Naive thymus-derived CD8-positive, alpha-beta T cell (primary cell): ENCODE measurements at regions of chr5 and their contacts with region 1.

Region 1: GRCh38 chr5:54517174-54518092 is at the start of gene SNX18:
- DNase-seq: peak; percentile 84 to 95 (median 92)
- ATAC-seq: peak; percentile 89 to 90
- H3K4me3 Mint-ChIP-seq: peak within 1 kb of the TSS; percentile 80 to 95 (median 93)
- H3K27ac Mint-ChIP-seq: peak within 1 kb of the TSS; percentile 2 to 92 (median 60)
- H3K4me1 Mint-ChIP-seq: peaks cover 7 to 43% (median 15%) of the 10 kb centered on the region in 4 donors
- H3K27me3 Mint-ChIP-seq: peaks cover 0 to 2% (median 0%) of the 10 kb centered on the region in 5 donors
- polyA plus RNA-seq, gene SNX18: 2.6 to 3.3 (median 3.2) TPM

Region 2: DNA sequence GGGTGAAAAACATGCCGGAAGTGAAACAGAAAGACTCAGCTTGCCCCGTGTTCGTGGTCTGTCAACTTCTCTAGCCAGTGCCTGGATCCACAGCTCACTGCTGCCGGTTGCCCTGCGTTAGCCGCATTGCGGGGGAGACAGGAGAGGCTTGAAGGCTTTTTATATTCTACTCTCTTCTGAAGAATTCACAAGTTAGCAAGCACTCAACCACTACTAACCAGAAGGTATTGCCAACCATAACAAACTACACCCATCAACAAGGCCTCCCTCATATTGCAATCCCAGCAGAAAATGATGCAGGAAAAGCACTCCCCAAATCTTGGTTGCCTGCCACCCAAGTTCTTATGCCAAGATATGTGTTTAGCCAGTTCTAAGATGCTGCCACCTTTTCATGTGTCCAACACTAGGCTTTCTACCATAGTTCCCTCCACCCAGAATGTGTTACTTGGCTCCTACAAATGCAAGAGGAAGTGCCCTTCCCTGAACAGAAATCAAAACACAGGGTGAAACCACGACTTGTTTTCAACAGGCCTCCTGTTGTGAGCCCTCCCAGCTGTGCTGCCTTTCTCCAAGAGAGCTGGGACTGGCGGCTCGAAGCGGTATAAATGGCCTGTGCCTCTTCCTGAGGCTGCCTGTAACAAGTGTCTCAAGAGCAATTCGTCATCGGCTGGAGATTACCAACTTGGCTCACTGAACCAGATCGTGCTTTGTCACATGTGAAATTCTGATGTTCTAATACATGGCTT is 129.1 kb after region 1 on chr5:
- POLR2A ChIA-PET with region 1: interaction called, 39 read pairs
- DNase-seq: peak; percentile 8 to 80 (median 60)
- ATAC-seq: peak; percentile 83 to 85
- H3K4me3 Mint-ChIP-seq: peak overlapping the region; percentile 63 to 84 (median 77)
- H3K27ac Mint-ChIP-seq: peak overlapping the region; percentile 91 to 99 (median 95)
- H3K4me1 Mint-ChIP-seq: peaks cover 34 to 70% (median 57%) of the 10 kb centered on the region in 4 donors
- H3K27me3 Mint-ChIP-seq: no peaks in the 10 kb centered on the region

Region 3: DNA sequence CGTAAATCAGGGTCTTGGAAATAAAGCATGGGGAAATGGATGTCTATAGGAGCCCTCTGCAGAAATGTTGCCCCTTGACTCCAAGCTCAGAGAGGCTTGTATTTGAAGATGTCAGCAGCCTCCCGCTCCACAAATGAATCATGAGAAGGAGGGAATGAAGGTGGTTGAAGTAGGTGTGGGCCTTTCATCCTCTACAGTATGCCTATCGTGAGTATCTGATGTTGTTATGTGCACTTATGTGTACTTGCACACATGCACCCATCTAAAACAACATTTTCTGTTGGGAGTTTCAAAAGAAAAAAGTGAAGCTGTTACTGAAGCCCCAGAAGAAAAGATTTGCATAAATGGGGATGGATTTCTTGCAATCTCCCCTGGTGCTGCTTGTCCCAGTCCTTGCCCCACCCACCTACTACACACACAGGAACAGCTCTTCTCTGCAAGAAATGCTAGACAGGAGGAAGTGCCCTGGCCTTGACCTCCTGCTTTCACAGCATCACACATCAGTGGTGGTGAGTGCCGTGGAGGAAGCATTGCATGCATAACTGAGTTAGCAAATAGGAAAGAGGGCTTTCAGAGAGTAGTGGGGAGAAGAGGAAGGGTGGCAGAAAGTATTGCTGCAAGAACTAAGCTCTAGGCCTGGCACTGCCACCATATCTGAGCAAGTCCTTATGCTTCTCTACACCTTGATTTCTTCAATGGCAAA is 156.2 kb after region 1 on chr5:
- POLR2A ChIA-PET with region 1: interaction called, 10 read pairs
- DNase-seq: peak in 9 of 10 donors; percentile 1 to 64 (median 42)
- ATAC-seq: peak; percentile 87 to 94
- H3K4me3 Mint-ChIP-seq: peak overlapping the region in 8 of 10 donors; percentile 2 to 61 (median 47)
- H3K27ac Mint-ChIP-seq: peak overlapping the region; percentile 10 to 88 (median 72)
- H3K4me1 Mint-ChIP-seq: peaks cover 30 to 76% (median 56%) of the 10 kb centered on the region in 4 donors
- H3K27me3 Mint-ChIP-seq: no peaks in the 10 kb centered on the region

Region 4: GRCh38 chr5:54844905-54845566 is 327.6 kb after region 1 on chr5:
- POLR2A ChIA-PET with region 1: interaction called, 50 read pairs
- DNase-seq: peak in 3 of 10 donors; percentile 60 to 68 (median 64)
- ATAC-seq: peak; percentile 36 to 68
- H3K4me3 Mint-ChIP-seq: peak overlapping the region in 6 of 10 donors; percentile 30 to 75 (median 60)
- H3K27ac Mint-ChIP-seq: peak overlapping the region in 7 of 10 donors; percentile 9 to 65 (median 36)
- H3K4me1 Mint-ChIP-seq: peaks cover 4 to 11% (median 5%) of the 10 kb centered on the region in 4 donors
- H3K27me3 Mint-ChIP-seq: peaks cover 0 to 10% (median 6%) of the 10 kb centered on the region in 5 donors

Region 5: GRCh38 chr5:54867310-54867944 is 350.0 kb after region 1 on chr5:
- POLR2A ChIA-PET with region 1: interaction called, 18 read pairs
- DNase-seq: peak in 3 of 10 donors; percentile 60 to 70 (median 65)
- ATAC-seq: peak; percentile 70 to 72
- H3K4me3 Mint-ChIP-seq: peak overlapping the region in 9 of 10 donors; percentile 6 to 83 (median 26)
- H3K27ac Mint-ChIP-seq: peak overlapping the region in 3 of 10 donors; percentile 23 to 34 (median 26)
- H3K4me1 Mint-ChIP-seq: peaks cover 3 to 8% (median 5%) of the 10 kb centered on the region in 4 donors
- H3K27me3 Mint-ChIP-seq: peaks cover 0 to 14% (median 5%) of the 10 kb centered on the region in 5 donors